ENCODE measurements at regions of chr6 and their contacts with region 1.

Region 1: DNA sequence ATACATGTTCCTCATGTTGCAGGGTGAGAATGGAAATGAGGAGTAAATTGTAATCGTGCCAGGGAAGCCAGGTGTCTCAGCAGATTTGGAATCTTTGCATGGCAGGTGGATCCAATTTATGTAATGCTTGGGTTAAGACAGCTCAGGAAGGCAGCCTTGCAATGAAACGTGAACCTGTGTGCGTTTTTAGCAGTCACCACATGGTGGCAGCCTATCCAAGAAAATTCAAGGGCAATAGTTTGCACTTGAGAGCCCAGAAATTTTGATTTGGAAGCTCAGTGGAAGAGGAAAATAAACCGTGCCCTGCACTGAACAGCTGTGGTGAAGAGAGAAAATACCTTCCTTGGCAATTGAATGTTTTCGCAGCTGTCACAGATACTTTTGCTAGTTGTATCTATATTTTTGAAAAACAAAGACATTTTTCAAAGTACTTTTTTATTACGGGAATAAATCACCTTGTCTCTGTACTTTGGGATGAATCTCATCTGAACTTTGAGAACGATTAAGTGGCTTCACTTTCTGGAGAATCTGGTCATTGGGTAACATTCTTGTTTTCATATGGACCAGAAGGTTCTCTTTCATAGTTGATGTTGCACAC is 26.5 kb downstream of the MTHFD1L start:
- DNase-seq: peak; percentile 45
- H3K4me3 ChIP-seq: no peak overlapping the region
- CTCF ChIP-seq: peak; percentile 77

Region 2: DNA sequence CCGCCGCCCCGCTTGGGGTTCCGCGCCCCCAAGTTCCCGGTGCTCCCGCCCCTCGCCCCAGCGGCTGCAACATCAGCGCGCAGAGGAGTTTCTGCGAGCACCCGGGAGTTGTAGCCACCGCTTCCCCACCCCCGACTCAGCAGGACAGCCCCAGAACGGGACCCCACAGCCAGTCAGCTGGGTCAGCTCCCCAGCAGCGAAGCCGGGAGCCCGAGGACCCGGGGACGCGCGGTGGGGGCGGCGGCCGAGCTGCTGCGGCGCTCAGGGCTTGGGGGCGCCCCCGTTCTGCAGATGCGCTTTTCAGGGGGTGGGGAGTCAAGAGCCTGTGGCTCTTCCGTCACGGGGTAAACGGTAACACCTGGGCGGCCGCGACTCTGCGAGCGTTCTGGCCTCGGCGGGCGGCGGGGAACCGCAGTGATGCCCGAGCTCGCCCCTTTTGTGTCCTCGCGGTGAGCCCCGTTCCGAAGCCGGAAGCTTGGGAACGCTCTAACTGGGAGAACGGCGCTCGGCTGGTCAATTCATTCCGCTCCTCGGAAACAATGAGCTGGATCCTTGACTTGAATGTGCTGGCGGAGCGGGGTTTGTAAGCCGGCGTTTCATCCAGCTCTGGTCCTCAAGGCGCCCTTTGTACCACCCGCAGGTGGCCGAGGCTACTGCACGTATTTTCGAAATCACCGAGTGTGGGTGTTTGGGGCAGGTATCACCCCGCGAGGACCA is 291.5 kb before region 1 on chr6:
- CTCF ChIA-PET with region 1: no interaction called
- POLR2A ChIA-PET with region 1: no interaction called
- DNase-seq: no peak
- H3K4me3 ChIP-seq: peak overlapping the region; percentile 47
- CTCF ChIP-seq: peak; percentile 34

Region 3: DNA sequence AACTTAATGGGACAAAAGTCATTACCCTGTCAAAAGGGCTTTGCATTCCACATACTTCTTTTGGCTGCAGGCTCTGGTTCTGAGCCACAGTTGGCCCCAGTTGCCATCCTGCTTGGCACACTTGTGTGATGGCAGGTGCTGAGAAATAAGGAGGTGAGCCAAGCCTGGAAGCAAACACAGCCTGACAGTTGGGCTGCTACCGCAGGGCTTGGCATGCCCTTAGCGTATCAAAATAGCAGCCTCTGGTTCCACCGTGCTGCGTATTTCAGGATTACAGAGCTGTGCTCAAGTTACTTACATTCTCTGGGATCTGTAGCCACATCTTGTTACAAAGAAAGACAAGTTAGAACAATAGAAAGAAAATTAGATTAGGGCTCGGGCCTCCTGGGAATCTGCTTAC is 15.4 kb before region 1 on chr6:
- CTCF ChIA-PET with region 1: interaction called, 34 read pairs
- POLR2A ChIA-PET with region 1: no interaction called
- DNase-seq: no peak
- H3K4me3 ChIP-seq: no peak overlapping the region
- CTCF ChIP-seq: no peak

Region 4: GRCh38 chr6:150907383-150907782 is 15.4 kb after region 1 on chr6:
- CTCF ChIA-PET with region 1: interaction called, 37 read pairs
- POLR2A ChIA-PET with region 1: no interaction called
- DNase-seq: no peak
- H3K4me3 ChIP-seq: no peak overlapping the region
- CTCF ChIP-seq: no peak

Region 5: DNA sequence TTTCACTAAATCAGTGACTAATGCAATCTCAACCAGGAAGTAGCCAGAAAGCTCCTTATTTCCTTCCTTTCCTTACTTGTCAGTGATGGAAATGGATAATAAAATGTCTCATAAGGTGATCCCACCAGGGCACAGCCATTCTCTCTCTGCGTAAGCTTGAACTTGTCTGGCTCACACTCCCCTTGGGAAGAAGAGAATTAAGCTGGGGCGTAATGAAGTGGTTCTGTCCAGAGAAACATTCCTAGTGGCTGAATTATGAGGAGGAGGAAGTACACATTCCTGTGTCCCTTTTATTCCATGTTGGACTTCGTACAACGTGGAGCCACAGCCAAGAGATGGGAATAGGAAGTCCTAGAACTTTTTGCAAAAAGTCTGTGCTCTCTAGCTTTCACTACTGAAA is 67.2 kb after region 1 on chr6:
- CTCF ChIA-PET with region 1: interaction called, 12 read pairs
- POLR2A ChIA-PET with region 1: no interaction called
- DNase-seq: no peak
- H3K4me3 ChIP-seq: no peak overlapping the region
- CTCF ChIP-seq: no peak

Region 6: DNA sequence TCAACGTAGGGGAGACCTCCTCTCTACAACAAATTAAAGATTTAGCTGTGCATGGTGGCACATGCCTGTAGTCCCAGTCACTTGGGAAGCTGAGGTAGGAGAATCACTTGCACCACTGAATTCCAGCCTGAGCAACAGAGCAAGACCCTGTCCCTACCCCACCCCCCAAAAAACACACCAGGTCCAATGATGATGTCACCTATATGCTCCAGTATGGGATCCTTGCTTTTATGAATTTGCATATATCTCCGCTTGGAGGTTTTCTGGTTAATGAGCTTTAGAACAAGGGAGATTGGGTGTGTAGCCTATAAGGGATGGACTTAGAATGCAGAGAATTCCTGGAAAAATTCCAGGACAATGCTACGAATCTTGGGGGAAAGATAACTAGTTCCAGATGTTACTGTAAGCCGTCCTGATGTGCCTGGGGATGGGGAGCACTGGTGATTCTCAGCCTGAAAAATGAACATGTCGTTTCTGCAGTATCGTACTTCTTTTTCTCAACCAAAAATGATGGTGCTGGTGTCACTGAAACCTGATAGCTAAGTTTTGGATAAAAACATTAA is 438.2 kb after region 1 on chr6:
- CTCF ChIA-PET with region 1: interaction called, 251 read pairs
- POLR2A ChIA-PET with region 1: no interaction called
- DNase-seq: peak; percentile 69
- H3K4me3 ChIP-seq: no peak overlapping the region
- CTCF ChIP-seq: no peak

Region 7: GRCh38 chr6:151370509-151371078 is 478.6 kb after region 1 on chr6:
- CTCF ChIA-PET with region 1: interaction called, 11 read pairs
- POLR2A ChIA-PET with region 1: no interaction called
- DNase-seq: peak; percentile 10
- H3K4me3 ChIP-seq: no peak overlapping the region
- CTCF ChIP-seq: peak; percentile 17

Measured in AG04449 (cell line).